Naive thymus-derived CD4-positive, alpha-beta T cell (primary cell): ENCODE measurements at regions of chr17 and their contacts with region 1.

Region 1: GRCh38 chr17:44899069-44899782 is at the start of gene EFTUD2:
- DNase-seq: peak; percentile 91 to 99 (median 96)
- ATAC-seq: peak; percentile 94
- H3K4me3 ChIP-seq: peak within 1 kb of the TSS; percentile 89
- H3K4me3 Mint-ChIP-seq: peak within 1 kb of the TSS; percentile 84 to 97 (median 96)
- H3K27ac ChIP-seq: peak within 1 kb of the TSS; percentile 96
- H3K27ac Mint-ChIP-seq: peak within 1 kb of the TSS; percentile 99 to 100 (median 99)
- H3K4me1 ChIP-seq: peaks cover 6 to 10% of the 10 kb centered on the region in 2 donors
- H3K4me1 Mint-ChIP-seq: peaks cover 26 to 41% (median 35%) of the 10 kb centered on the region in 7 donors
- H3K27me3 ChIP-seq: no peaks in the 10 kb centered on the region
- H3K27me3 Mint-ChIP-seq: peaks cover 0 to 23% (median 0%) of the 10 kb centered on the region in 5 donors
- total RNA-seq, gene EFTUD2: 94.3 to 157 (median 120) TPM

Region 2: DNA sequence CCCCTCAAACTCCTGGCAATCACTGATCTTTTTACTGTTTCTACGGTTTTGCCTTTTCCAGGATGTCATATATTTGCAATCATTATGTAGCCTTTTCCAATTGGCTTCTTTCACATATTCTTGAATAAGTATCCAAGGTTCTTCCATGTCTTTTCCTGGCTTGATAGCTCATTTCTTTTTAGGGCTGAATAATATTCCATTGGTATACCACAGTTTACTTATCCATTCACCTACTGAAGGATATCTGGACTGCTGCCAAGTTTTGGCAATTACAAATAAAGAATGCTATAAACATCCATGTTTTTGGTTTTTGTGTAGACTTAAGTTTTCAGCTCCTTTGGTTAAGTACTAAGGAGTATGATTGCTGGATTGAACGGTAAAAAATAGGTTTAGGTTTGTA is 412.1 kb before region 1 on chr17:
- CTCF ChIA-PET with region 1: no interaction called
- POLR2A ChIA-PET with region 1: no interaction called
- intact Hi-C with region 1: no loop called
- DNase-seq: no peak
- ATAC-seq: no peak
- H3K4me3 ChIP-seq: no peak overlapping the region
- H3K4me3 Mint-ChIP-seq: no peak overlapping the region
- H3K27ac ChIP-seq: no peak overlapping the region
- H3K27ac Mint-ChIP-seq: peak overlapping the region in 1 of 9 donors; percentile 26
- H3K4me1 ChIP-seq: no peaks in the 10 kb centered on the region
- H3K4me1 Mint-ChIP-seq: peaks cover 0 to 52% (median 32%) of the 10 kb centered on the region in 7 donors
- H3K27me3 ChIP-seq: no peaks in the 10 kb centered on the region
- H3K27me3 Mint-ChIP-seq: no peaks in the 10 kb centered on the region

Region 3: GRCh38 chr17:44689477-44690217 is 209.6 kb before region 1 on chr17 and contains the start of gene CCDC43:
- CTCF ChIA-PET with region 1: no interaction called
- POLR2A ChIA-PET with region 1: interaction called, 4 read pairs
- intact Hi-C with region 1: loop called in 1 of 2 experiments (anchors 1 kb)
- DNase-seq: peak; percentile 86 to 94 (median 92)
- ATAC-seq: peak; percentile 99
- H3K4me3 ChIP-seq: peak within 1 kb of the TSS; percentile 94
- H3K4me3 Mint-ChIP-seq: peak within 1 kb of the TSS; percentile 92 to 99 (median 98)
- H3K27ac ChIP-seq: peak within 1 kb of the TSS; percentile 90
- H3K27ac Mint-ChIP-seq: peak within 1 kb of the TSS; percentile 95 to 98 (median 96)
- H3K4me1 ChIP-seq: peaks cover 13 to 14% of the 10 kb centered on the region in 2 donors
- H3K4me1 Mint-ChIP-seq: peaks cover 24 to 50% (median 26%) of the 10 kb centered on the region in 7 donors
- H3K27me3 ChIP-seq: no peaks in the 10 kb centered on the region
- H3K27me3 Mint-ChIP-seq: no peaks in the 10 kb centered on the region
- total RNA-seq, gene CCDC43: 15.0 to 29.1 (median 20.2) TPM

Region 4: GRCh38 chr17:44708401-44709181 is 190.6 kb before region 1 on chr17 and contains the start of gene DBF4B:
- CTCF ChIA-PET with region 1: no interaction called
- POLR2A ChIA-PET with region 1: interaction called, 3 read pairs
- intact Hi-C with region 1: loop called (anchors 2 to 10 kb)
- DNase-seq: peak; percentile 49 to 92 (median 86)
- ATAC-seq: peak; percentile 99
- H3K4me3 ChIP-seq: peak within 1 kb of the TSS; percentile 91
- H3K4me3 Mint-ChIP-seq: peak within 1 kb of the TSS in 1 of 10 donors; percentile 79
- H3K27ac ChIP-seq: peak within 1 kb of the TSS; percentile 62
- H3K27ac Mint-ChIP-seq: peak within 1 kb of the TSS in 1 of 9 donors; percentile 72
- H3K4me1 ChIP-seq: peaks cover 14 to 15% of the 10 kb centered on the region in 2 donors
- H3K4me1 Mint-ChIP-seq: peaks cover 0 to 7% (median 4%) of the 10 kb centered on the region in 7 donors
- H3K27me3 ChIP-seq: no peaks in the 10 kb centered on the region
- H3K27me3 Mint-ChIP-seq: peaks cover 0 to 9% (median 4%) of the 10 kb centered on the region in 5 donors
- total RNA-seq, gene DBF4B: 2.8 to 23.1 (median 7.8) TPM

Region 5: DNA sequence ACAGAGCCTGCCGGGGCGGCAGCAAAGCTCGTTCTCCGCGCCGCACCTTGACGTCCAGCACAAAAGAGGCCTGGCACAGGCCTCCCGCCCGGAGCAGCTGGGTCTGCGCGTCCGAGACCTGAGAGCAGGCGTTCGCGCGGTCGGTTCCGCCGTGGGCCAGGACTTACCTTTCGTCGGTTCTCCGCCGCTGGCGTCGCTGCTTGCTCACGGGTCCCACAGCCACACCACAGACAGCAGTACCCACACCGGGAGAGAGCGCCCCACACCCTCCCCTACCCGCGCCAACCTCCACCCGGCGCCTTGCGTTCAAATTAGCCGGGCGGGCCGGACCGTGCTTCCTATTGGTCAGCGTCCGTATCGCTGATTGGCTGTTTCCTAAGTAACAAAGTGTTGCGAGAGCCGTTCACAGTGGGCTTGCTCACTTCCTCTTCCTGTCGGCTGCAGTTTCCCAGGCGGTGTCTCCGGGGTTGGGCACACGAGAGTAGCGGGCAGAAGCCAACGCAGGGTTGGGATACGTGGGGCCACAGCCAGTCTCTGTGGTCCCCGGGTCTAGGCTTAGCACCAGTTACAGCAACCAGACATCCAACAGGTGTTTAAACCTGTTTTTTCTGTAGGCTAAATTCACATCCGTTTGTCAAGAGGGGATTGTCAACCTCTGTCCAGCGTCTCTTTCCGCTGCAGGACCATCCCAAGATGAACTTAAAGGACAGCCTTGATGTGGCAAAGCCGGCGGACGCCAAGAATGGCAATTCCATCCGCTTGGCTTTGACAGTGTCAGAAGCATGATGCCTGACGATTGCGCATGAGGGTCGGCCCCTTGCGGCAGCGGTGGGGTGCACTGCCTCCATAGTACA is 48.5 kb after region 1 on chr17 and contains the start of gene KIF18B:
- CTCF ChIA-PET with region 1: no interaction called
- POLR2A ChIA-PET with region 1: interaction called, 4 read pairs
- intact Hi-C with region 1: loop called (anchors 1 kb)
- DNase-seq: peak; percentile 73 to 91 (median 86)
- ATAC-seq: peak; percentile 99
- H3K4me3 ChIP-seq: peak within 1 kb of the TSS; percentile 83
- H3K4me3 Mint-ChIP-seq: peak within 1 kb of the TSS; percentile 85 to 98 (median 93)
- H3K27ac ChIP-seq: peak within 1 kb of the TSS; percentile 69
- H3K27ac Mint-ChIP-seq: peak within 1 kb of the TSS; percentile 86 to 98 (median 93)
- H3K4me1 ChIP-seq: peaks cover 5 to 6% of the 10 kb centered on the region in 2 donors
- H3K4me1 Mint-ChIP-seq: peaks cover 0 to 40% (median 5%) of the 10 kb centered on the region in 7 donors
- H3K27me3 ChIP-seq: no peaks in the 10 kb centered on the region
- H3K27me3 Mint-ChIP-seq: peaks cover 0 to 7% (median 0%) of the 10 kb centered on the region in 5 donors
- total RNA-seq, gene KIF18B: 0.17 to 57.2 TPM in 2 of 5 experiments, not detected in the others

Region 6: GRCh38 chr17:44968226-44969143 is 69.3 kb after region 1 on chr17 and contains the start of gene C1QL1:
- CTCF ChIA-PET with region 1: no interaction called
- POLR2A ChIA-PET with region 1: no interaction called
- intact Hi-C with region 1: loop called in 1 of 2 experiments (anchors 1 kb)
- DNase-seq: peak; percentile 58 to 93 (median 69)
- ATAC-seq: peak; percentile 99
- H3K4me3 ChIP-seq: peak within 1 kb of the TSS; percentile 33
- H3K4me3 Mint-ChIP-seq: peak within 1 kb of the TSS; percentile 64 to 87 (median 78)
- H3K27ac ChIP-seq: no peak within 1 kb of the TSS
- H3K27ac Mint-ChIP-seq: peak within 1 kb of the TSS in 2 of 9 donors; percentile 16 to 55
- H3K4me1 ChIP-seq: peaks cover 19 to 24% of the 10 kb centered on the region in 2 donors
- H3K4me1 Mint-ChIP-seq: peaks cover 23 to 40% (median 29%) of the 10 kb centered on the region in 7 donors
- H3K27me3 ChIP-seq: peaks cover 14 to 21% of the 10 kb centered on the region in 2 donors
- H3K27me3 Mint-ChIP-seq: peaks cover 30 to 84% (median 45%) of the 10 kb centered on the region in 5 donors
- total RNA-seq, gene C1QL1: 0.29 TPM in 1 of 5 experiments, not detected in the others

Region 7: GRCh38 chr17:45410144-45411091 is 511.2 kb after region 1 on chr17:
- CTCF ChIA-PET with region 1: no interaction called
- POLR2A ChIA-PET with region 1: no interaction called
- intact Hi-C with region 1: loop called in 1 of 2 experiments (anchors 2 kb)
- DNase-seq: peak in 8 of 9 donors; percentile 55 to 66 (median 60)
- ATAC-seq: peak; percentile 79
- H3K4me3 ChIP-seq: peak overlapping the region; percentile 96
- H3K4me3 Mint-ChIP-seq: peak overlapping the region; percentile 97 to 100 (median 99)
- H3K27ac ChIP-seq: peak overlapping the region; percentile 94
- H3K27ac Mint-ChIP-seq: peak overlapping the region; percentile 96 to 99 (median 99)
- H3K4me1 ChIP-seq: peaks cover 29 to 45% of the 10 kb centered on the region in 2 donors
- H3K4me1 Mint-ChIP-seq: peaks cover 40 to 63% (median 60%) of the 10 kb centered on the region in 7 donors
- H3K27me3 ChIP-seq: no peaks in the 10 kb centered on the region
- H3K27me3 Mint-ChIP-seq: no peaks in the 10 kb centered on the region